ENCODE measurements at regions of chr6 and their contacts with region 1.

Region 1: DNA sequence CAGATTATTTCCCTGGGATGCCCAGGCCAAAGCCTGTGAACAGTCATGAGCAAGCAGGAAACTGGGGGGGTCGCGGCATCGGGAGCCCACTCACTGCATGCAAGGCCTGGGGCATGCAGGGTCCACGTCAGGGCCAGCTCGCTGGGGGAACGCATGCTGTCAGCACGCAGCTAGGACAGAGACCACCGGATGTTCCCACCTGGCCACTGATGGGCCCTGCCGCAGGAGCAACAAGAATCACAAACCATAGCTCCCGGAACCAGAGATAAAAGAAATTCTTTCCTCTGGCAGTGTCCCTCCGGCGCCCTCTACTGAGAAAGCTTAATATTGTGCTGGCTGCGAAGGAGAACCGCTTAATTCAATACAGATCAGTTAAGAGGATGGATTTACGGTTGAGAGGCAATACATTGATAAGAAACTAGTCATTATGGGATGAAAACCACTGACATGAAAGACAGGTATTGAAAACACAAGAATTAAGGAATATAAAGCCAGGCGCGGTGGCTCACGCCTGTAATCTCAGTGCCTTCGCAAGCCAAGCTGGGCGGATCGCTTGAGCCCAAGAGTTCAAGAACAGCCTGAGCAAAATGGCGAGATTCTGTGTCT is 32.6 kb downstream of the C6orf15 start:
- DNase-seq: peak; percentile 41
- H3K4me3 ChIP-seq: no peak overlapping the region
- H3K27ac ChIP-seq: no peak overlapping the region
- H3K27me3 ChIP-seq: no peaks in the 10 kb centered on the region
- CTCF ChIP-seq: peak; percentile 94

Region 2: GRCh38 chr6:30793521-30794194 is 286.1 kb before region 1 on chr6:
- CTCF ChIA-PET with region 1: no interaction called
- POLR2A ChIA-PET with region 1: no interaction called
- DNase-seq: peak; percentile 59
- H3K4me3 ChIP-seq: no peak overlapping the region
- H3K27ac ChIP-seq: peak overlapping the region; percentile 84
- H3K27me3 ChIP-seq: no peaks in the 10 kb centered on the region
- CTCF ChIP-seq: no peak

Region 3: GRCh38 chr6:30816791-30817739 is 262.7 kb before region 1 on chr6:
- CTCF ChIA-PET with region 1: interaction called, 93 read pairs
- POLR2A ChIA-PET with region 1: no interaction called
- DNase-seq: no peak
- H3K4me3 ChIP-seq: no peak overlapping the region
- H3K27ac ChIP-seq: no peak overlapping the region
- H3K27me3 ChIP-seq: no peaks in the 10 kb centered on the region
- CTCF ChIP-seq: no peak

Region 4: DNA sequence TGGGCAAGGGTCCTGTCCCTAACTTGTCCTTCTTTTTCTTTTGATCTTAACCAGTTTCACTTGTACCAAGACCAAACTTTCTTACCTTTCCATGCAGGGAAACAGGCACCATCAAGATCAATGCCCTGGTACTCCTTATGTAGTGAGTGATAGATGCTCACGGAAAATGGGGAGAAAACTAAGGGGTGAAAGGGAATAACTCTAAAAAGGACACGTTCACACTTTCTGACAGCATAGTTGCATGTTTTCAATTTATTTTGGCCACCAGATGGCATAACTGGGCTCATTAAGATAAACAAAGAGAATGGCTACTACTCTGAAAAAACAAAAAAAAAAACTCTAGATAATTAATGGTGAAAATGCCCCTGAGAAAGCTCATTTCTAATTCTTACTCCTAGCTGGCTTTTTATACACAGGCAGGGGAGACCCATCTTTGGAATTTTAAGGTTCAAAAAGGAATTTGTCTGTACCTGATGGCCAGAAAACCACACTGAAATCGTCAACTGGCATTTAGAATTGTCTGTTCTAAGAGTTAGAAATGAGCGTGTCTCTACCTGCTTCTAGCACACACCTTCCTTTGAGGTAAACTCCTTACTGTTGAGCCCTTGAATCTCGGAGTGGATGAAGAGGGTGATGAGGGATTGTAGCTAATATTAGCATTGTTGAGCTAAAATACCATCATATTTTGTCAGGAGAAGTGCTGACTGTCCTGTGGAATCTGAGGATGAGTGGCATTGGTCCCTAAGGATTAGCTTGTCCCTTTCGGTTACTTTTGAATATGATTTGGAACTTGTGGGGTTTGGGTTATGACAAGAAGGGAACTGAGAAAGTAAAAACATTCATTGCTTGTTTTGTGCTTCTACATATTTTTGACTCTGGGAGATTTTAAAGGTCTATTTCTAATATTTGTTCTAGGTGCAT is 257.6 kb before region 1 on chr6:
- CTCF ChIA-PET with region 1: interaction called, 93 read pairs
- POLR2A ChIA-PET with region 1: no interaction called
- DNase-seq: no peak
- H3K4me3 ChIP-seq: no peak overlapping the region
- H3K27ac ChIP-seq: peak overlapping the region; percentile 21
- H3K27me3 ChIP-seq: no peaks in the 10 kb centered on the region
- CTCF ChIP-seq: peak; percentile 58

Region 5: DNA sequence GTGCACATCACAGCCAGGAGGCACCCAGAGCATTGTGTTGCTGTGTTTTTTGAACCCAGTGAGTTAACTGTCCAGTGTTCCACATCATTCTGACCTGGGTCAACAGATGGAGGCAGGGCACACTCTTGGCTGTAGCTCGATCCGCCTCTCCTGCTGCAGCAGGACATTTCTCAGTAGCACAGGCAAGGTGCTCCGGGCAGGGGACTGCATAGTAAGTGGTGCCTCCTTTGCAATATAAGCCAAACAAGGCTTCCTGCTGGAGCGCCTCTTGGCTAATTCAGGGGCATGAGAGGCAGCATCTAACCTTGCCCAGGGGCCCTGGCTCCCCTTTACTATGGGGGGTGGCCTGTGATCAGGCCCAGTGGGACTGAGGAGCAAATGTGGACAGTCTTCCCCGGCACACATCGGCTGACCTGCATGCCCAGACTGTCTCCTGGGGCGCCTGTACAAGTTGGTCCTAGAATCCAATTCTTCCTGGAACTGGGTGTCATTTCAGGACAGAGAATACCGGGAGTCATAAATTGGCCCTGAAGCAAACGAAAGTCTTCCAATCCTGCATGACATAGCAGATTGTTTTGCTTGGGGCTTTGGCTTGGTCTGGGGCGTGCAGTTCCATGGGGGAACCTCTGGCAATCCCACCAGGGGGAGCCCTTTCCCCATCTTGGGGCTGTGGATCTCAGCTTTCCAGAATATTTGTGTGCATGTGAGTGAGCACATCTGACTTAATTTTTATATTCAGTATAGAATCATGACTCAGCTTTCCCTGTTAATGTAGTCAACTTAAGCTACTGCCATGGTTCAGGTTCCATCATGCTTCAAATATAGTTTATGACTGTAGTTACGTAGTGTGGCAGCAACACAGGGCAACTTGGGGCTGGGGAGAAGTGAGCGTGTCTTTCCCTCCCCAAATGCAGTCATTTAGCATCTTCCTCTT is 251.5 kb before region 1 on chr6:
- CTCF ChIA-PET with region 1: interaction called, 93 read pairs
- POLR2A ChIA-PET with region 1: interaction called, 3 read pairs
- DNase-seq: peak; percentile 84
- H3K4me3 ChIP-seq: no peak overlapping the region
- H3K27ac ChIP-seq: peak overlapping the region; percentile 78
- H3K27me3 ChIP-seq: no peaks in the 10 kb centered on the region
- CTCF ChIP-seq: peak; percentile 97

Region 6: GRCh38 chr6:30942338-30943060 is 137.3 kb before region 1 on chr6:
- CTCF ChIA-PET with region 1: interaction called, 32 read pairs
- POLR2A ChIA-PET with region 1: interaction called, 3 read pairs
- DNase-seq: peak; percentile 44
- H3K4me3 ChIP-seq: 0 out of 2 replicates have a peak overlapping the region, but pooled peaks have one; percentile 5
- H3K27ac ChIP-seq: no peak overlapping the region
- H3K27me3 ChIP-seq: peaks cover 51% of the 10 kb centered on the region
- CTCF ChIP-seq: peak; percentile 78

Region 7: GRCh38 chr6:31058128-31058894 is 21.4 kb before region 1 on chr6:
- CTCF ChIA-PET with region 1: interaction called, 11 read pairs
- POLR2A ChIA-PET with region 1: no interaction called
- DNase-seq: peak; percentile 87
- H3K4me3 ChIP-seq: no peak overlapping the region; the same call in 1 of the 2 replicates
- H3K27ac ChIP-seq: peak overlapping the region; percentile 90
- H3K27me3 ChIP-seq: peaks cover 3% of the 10 kb centered on the region
- CTCF ChIP-seq: peak; percentile 59

Region 8: GRCh38 chr6:31092769-31093505 is 13.2 kb after region 1 on chr6:
- CTCF ChIA-PET with region 1: interaction called, 16 read pairs
- POLR2A ChIA-PET with region 1: interaction called, 3 read pairs
- DNase-seq: no peak
- H3K4me3 ChIP-seq: no peak overlapping the region
- H3K27ac ChIP-seq: no peak overlapping the region
- H3K27me3 ChIP-seq: peaks cover 4% of the 10 kb centered on the region
- CTCF ChIP-seq: no peak

Measured in AG04450 (cell line).